Sciatic nerve (tissue), 2 donors: ENCODE measurements at regions of chr10 and their contacts with region 1.

Region 1: DNA sequence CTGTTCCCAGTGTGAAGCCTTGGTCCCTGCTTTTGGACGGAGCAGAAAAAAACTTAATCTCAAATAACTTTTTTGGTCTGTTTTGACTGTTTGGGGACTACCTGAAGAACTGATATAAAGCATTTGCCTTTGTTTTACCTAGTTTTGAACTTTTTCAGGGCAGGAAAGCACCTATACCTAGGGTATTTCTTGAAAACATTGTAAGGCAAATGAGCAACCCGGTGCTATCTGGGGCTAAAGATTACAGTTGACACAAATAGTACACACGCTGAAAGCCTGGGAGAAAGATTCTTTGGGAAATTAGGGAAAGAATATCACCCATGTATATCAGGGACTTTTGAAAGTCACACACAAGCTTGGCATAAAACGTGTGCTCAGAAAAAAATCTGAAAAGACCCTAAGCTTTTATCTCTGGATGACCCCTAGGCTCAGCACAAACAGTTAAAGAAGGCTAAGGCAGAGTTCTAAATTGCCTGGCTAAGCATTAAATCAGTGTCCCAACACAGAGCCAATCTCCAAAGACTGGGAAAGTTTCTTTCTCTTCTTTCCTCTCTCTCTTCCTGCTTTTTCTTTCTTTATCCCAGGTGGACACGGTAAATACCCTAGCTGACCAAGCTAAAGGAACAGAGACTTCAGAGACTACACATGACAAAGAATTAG is 389.8 kb downstream of the SH2D4B start:
- DNase-seq: no peak
- ATAC-seq: no peak

Region 2: DNA sequence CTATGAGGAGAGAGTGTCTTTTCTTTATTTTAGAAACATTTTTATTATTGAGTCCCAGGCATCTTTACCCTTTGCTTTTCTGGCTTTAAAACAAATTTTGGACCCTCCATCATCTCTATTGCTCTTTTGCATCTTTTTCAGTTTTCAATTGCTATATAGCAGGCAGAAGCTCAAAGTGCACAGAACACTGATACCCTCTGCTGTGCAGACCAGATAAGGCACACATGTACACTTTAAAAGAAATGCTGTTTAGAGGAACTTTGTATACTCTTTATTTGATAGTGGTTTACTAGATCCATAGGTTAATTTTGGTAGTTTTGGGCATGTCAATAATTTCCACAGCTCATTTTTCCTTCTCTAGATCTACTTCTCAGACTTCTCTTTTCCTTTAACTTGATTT is 65.7 kb before region 1 on chr10:
- intact Hi-C with region 1: loop called (anchors 2 kb)
- DNase-seq: no peak
- ATAC-seq: no peak